Panc1 (cell line): ENCODE measurements at regions of chr2 and their contacts with region 1.

Region 1: GRCh38 chr2:97982621-97983020 is 13.1 kb downstream of the TMEM131 start:
- DNase-seq: no peak
- ATAC-seq: no peak
- H3K4me3 ChIP-seq: no peak overlapping the region
- H3K27ac ChIP-seq: no peak overlapping the region
- H3K4me1 ChIP-seq: no peaks in the 10 kb centered on the region
- H3K27me3 ChIP-seq: no peaks in the 10 kb centered on the region
- CTCF ChIP-seq: no peak

Region 2: DNA sequence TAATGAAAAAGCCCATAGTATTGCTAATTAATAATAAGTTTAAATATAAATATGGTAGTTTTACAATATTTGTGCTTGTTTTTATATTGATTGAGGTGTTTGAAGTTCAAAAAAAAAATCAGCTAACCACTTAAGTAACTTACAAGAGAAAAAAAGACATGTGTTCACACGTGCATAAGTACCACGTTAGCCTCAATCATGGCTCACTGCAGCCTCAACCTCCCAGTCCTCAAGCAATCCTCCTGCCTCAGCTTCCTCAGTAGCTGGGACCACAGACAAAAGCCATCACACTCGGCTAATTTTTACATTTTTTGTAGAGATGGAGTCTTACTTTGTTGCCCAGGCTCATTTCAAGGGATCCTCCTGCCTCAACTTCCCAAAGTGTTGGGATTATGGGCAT is 728.9 kb after region 1 on chr2:
- CTCF ChIA-PET with region 1: interaction called, 15 read pairs
- POLR2A ChIA-PET with region 1: no interaction called
- in situ Hi-C with region 1: no loop called
- intact Hi-C with region 1: no loop called
- DNase-seq: no peak
- ATAC-seq: no peak
- H3K4me3 ChIP-seq: no peak overlapping the region
- H3K27ac ChIP-seq: no peak overlapping the region
- H3K4me1 ChIP-seq: no peaks in the 10 kb centered on the region
- H3K27me3 ChIP-seq: peaks cover 5% of the 10 kb centered on the region; the same call in 1 of the 2 replicates
- CTCF ChIP-seq: no peak